ENCODE measurements at regions of chr6 and their contacts with region 1.

Region 1: DNA sequence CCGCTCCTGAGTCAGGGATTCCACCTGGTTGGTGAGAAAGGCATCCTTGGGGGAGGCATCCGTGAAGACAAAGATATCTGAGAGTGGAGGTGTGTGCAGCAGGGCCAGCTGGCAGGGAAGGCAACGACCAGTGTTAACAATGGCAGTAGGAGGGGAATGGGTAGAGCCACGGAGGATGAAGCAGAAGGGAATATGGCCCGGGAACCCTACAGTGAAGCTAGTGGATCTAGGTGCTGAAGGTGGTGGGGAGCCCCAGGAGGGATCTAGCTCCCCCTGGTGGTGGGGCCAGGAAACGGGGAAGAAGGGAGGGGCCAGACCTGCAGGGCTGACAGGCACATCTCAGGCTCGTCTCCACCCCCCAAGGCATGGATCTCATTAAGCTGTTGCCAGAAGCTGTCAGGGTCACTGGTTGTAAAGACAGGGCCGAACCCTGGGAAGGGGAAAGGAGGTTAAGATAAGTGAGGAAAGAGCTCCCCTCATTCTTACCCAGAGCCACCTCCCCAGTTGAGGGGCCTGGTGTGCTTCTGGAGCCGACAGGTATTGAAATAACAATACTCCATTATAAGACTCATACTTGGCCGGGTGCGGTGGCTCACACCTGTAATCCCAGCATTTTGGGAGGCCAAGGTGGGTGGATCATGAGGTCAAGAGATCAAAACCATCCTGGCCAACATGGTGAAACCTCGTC is 7.3 kb downstream of the VWA7 start:
- DNase-seq: no peak
- H3K4me3 ChIP-seq: no peak overlapping the region
- H3K27me3 ChIP-seq: no peaks in the 10 kb centered on the region
- CTCF ChIP-seq: peak; percentile 91

Region 2: GRCh38 chr6:31299511-31299910 is 470.3 kb before region 1 on chr6:
- CTCF ChIA-PET with region 1: no interaction called
- POLR2A ChIA-PET with region 1: no interaction called
- DNase-seq: no peak
- H3K4me3 ChIP-seq: no peak overlapping the region
- H3K27me3 ChIP-seq: peaks cover 12% of the 10 kb centered on the region; the same call in 1 of the 2 replicates
- CTCF ChIP-seq: no peak

Region 3: GRCh38 chr6:31680840-31681671 is 88.8 kb before region 1 on chr6 and contains the start of gene LY6G5C:
- CTCF ChIA-PET with region 1: interaction called, 13 read pairs
- POLR2A ChIA-PET with region 1: no interaction called
- DNase-seq: peak; percentile 67
- H3K4me3 ChIP-seq: peak within 1 kb of the TSS; percentile 39
- H3K27me3 ChIP-seq: no peaks in the 10 kb centered on the region
- CTCF ChIP-seq: peak; percentile 75
- polyA plus RNA-seq, gene LY6G5C: 3.1 and 3.6 TPM in 2 replicates

Region 4: GRCh38 chr6:31729515-31729978 is 40.3 kb before region 1 on chr6:
- CTCF ChIA-PET with region 1: interaction called, 28 read pairs
- POLR2A ChIA-PET with region 1: no interaction called
- DNase-seq: peak; percentile 58
- H3K4me3 ChIP-seq: peak overlapping the region; percentile 88
- H3K27me3 ChIP-seq: no peaks in the 10 kb centered on the region
- CTCF ChIP-seq: no peak

Region 5: GRCh38 chr6:31739639-31740396 is 30.0 kb before region 1 on chr6 and contains the start of gene MSH5:
- CTCF ChIA-PET with region 1: interaction called, 35 read pairs
- POLR2A ChIA-PET with region 1: interaction called, 3 read pairs
- DNase-seq: peak; percentile 98
- H3K4me3 ChIP-seq: peak within 1 kb of the TSS; percentile 75
- H3K27me3 ChIP-seq: no peaks in the 10 kb centered on the region
- CTCF ChIP-seq: no peak
- polyA plus RNA-seq, gene MSH5: 9.2 and 10.7 TPM in 2 replicates

Region 6: DNA sequence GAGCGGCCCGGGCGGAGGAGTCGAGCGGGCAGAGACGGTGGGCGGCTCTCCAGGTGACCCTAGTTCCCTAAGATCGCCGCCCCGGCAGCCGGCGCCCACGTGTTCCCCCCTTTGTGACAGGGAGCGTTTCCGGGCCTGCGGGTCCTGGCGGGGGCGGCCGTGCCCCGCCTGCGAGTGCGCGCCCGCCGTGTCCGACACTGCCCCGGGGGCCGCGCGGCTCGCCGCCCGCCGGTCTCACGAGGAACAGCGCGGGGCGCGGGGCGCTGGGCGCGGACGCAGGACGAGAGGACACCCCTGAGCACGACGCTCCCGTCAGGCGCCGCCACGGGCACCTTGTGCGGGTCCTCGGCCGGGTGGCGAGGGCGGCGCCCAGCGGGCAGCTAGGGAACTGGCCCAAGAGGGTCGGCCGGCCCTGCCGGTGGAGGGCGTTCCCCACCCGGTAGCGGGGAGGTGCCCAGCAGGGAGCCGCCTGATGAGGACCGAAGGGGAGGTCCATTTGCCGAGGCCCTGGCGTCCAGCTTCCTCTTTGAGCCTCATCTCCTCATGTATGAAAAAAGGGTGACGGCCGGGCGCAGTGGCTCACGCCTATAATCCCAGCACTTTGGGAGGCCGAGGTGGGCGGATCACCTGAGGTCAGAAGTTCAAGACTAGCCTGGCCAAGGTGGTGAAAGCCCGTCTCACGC is 25.9 kb after region 1 on chr6 and contains the start of gene VARS1:
- CTCF ChIA-PET with region 1: interaction called, 19 read pairs
- POLR2A ChIA-PET with region 1: no interaction called
- DNase-seq: no peak
- H3K4me3 ChIP-seq: peak within 1 kb of the TSS; percentile 95
- H3K27me3 ChIP-seq: no peaks in the 10 kb centered on the region
- CTCF ChIP-seq: peak; percentile 75
- polyA plus RNA-seq, gene VARS1: 10.9 and 33.9 TPM in 2 replicates

Region 7: GRCh38 chr6:31834434-31835198 is 64.8 kb after region 1 on chr6:
- CTCF ChIA-PET with region 1: interaction called, 19 read pairs
- POLR2A ChIA-PET with region 1: interaction called, 3 read pairs
- DNase-seq: no peak
- H3K4me3 ChIP-seq: peak overlapping the region; percentile 98
- H3K27me3 ChIP-seq: no peaks in the 10 kb centered on the region
- CTCF ChIP-seq: no peak

Measured in BJ (cell line).